ENCODE measurements at regions of chr19 and their contacts with region 1.

Region 1: GRCh38 chr19:44212250-44212865 is at the start of gene ZNF227:
- DNase-seq: peak; percentile 95
- H3K4me3 ChIP-seq: peak within 1 kb of the TSS; percentile 85
- H3K27ac ChIP-seq: peak within 1 kb of the TSS; percentile 80
- H3K4me1 ChIP-seq: no peaks in the 10 kb centered on the region
- H3K27me3 ChIP-seq: no peaks in the 10 kb centered on the region
- CTCF ChIP-seq: no peak
- total RNA-seq, gene ZNF227: 31.6 and 34.3 TPM in 2 replicates

Region 2: DNA sequence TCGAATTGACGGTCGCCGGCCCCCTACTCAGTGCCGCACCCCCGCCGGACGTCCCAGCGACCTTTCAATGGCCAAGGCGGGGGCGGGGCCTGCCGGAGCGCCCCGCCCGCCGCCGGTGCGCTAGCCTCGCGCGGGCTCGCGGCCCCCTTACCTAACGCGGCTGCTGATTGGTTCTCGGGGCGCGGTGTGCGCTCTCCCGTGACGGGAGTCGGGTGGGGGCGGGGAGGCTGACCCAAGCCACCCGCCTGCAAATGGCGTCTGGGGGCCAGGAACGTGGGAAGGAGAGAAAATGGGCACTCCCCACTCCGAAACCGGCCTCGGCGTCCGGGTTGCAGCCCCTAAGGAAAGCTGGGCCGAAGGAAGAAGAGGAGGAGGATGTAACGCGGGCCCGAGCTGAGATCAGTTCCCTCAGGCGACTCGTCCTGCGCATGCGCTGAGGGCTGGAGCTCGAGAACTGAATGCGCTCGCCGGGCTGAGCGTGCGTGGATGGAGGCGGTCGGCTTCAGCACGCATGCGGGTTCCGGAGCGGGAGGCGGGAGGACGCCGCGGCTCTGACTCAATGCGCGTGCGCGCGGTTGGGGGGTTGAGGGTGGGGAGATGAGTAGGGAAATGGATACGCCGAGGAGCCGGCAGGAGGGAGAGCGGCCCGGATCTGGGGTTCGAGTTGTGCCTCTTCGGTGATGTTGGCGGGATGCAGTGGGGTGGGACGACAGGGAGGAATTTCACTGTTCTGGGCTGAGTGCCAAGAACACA is 457.7 kb before region 1 on chr19 and contains the start of gene SMG9:
- CTCF ChIA-PET with region 1: no interaction called
- POLR2A ChIA-PET with region 1: no interaction called
- intact Hi-C with region 1: no loop called
- DNase-seq: peak; percentile 98
- H3K4me3 ChIP-seq: peak within 1 kb of the TSS; percentile 67
- H3K27ac ChIP-seq: peak within 1 kb of the TSS; percentile 98
- H3K4me1 ChIP-seq: peaks cover 11% of the 10 kb centered on the region
- H3K27me3 ChIP-seq: no peaks in the 10 kb centered on the region
- CTCF ChIP-seq: no peak
- total RNA-seq, gene SMG9: 78.8 and 90.6 TPM in 2 replicates

Region 3: GRCh38 chr19:44232867-44233266 is 20.5 kb after region 1 on chr19:
- CTCF ChIA-PET with region 1: interaction called, 10 read pairs
- POLR2A ChIA-PET with region 1: no interaction called
- intact Hi-C with region 1: no loop called
- DNase-seq: no peak
- H3K4me3 ChIP-seq: no peak overlapping the region
- H3K27ac ChIP-seq: no peak overlapping the region
- H3K4me1 ChIP-seq: no peaks in the 10 kb centered on the region
- H3K27me3 ChIP-seq: no peaks in the 10 kb centered on the region
- CTCF ChIP-seq: no peak

Region 4: DNA sequence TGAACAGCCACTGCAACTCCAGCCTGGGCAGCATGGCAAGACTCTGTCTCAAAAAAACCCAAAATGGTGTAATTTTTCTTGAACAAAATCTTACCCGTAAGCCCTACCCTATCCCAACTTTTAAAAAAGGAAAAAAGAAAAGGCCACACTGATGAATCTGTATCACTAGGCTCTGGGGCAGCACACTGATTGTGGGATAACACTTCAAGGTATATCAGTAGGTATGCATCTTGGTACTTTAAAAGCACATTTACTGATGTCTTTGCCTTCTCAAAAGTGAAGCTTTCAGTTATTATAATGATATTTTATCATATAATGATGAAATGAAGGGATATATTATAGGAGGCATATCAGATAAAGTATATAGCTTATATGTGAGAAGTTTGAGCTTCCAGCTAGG is 119.8 kb after region 1 on chr19:
- CTCF ChIA-PET with region 1: no interaction called
- POLR2A ChIA-PET with region 1: no interaction called
- intact Hi-C with region 1: no loop called
- DNase-seq: no peak
- H3K4me3 ChIP-seq: no peak overlapping the region
- H3K27ac ChIP-seq: no peak overlapping the region
- H3K4me1 ChIP-seq: no peaks in the 10 kb centered on the region
- H3K27me3 ChIP-seq: no peaks in the 10 kb centered on the region
- CTCF ChIP-seq: no peak

Region 5: GRCh38 chr19:44500148-44500956 is 288.0 kb after region 1 on chr19 and contains the start of gene ZNF180:
- CTCF ChIA-PET with region 1: no interaction called
- POLR2A ChIA-PET with region 1: interaction called, 10 read pairs
- intact Hi-C with region 1: no loop called
- DNase-seq: peak; percentile 96
- H3K4me3 ChIP-seq: peak within 1 kb of the TSS; percentile 84
- H3K27ac ChIP-seq: peak within 1 kb of the TSS; percentile 94
- H3K4me1 ChIP-seq: no peaks in the 10 kb centered on the region
- H3K27me3 ChIP-seq: no peaks in the 10 kb centered on the region
- CTCF ChIP-seq: peak; percentile 42
- total RNA-seq, gene ZNF180: 10.4 and 10.8 TPM in 2 replicates

Measured in A673 (cell line).